Tibial artery (tissue), 4 donors: ENCODE measurements at regions of chr4 and their contacts with region 1.

Region 1: GRCh38 chr4:13484122-13484748 is at the start of gene RAB28:
- DNase-seq: peak; percentile 94 to 96
- H3K4me3 ChIP-seq: peak within 1 kb of the TSS; percentile 69 to 89
- H3K27ac ChIP-seq: peak within 1 kb of the TSS; percentile 83 to 97
- H3K4me1 ChIP-seq: peaks cover 0 to 29% (median 15%) of the 10 kb centered on the region in 4 donors
- H3K27me3 ChIP-seq: no peaks in the 10 kb centered on the region
- CTCF ChIP-seq: no peak

Region 2: DNA sequence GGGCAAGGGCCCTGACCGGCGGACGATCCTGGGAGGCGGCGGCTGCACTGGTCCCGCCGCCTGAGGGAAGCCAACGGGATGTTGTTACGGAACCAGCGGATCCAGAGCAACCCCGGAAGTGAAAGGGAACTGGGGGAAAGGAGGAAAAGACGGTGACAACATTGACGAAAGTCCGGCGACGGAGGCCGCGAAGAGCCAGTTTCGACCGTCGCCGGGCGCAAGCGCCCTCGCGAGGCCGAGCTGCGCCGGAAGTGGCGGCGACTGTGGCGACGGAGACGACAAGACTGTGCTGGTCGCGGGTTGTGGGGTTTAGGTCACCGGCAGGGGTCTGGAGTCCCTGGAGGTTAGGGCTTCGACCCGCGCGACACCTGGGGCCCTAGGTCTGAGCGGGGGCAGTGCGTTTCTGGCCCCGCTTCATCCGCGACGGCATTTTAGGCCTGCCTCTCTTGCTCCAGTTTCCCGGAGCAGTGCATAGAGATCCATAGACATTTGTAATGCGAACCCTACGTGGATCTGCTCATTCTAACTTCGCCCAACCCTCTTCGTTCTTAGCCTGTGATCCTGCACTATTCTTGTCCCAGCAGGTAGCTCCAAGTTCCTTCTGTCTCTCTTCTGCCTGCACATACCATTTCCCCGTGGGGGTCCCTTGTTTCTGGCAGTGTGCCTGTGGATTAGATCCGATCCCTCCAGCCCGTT is 143.5 kb after region 1 on chr4 and contains the start of gene BOD1L1:
- intact Hi-C with region 1: loop called (anchors 10 kb)
- DNase-seq: peak; percentile 85 to 93
- H3K4me3 ChIP-seq: peak within 1 kb of the TSS; percentile 80 to 93
- H3K27ac ChIP-seq: peak within 1 kb of the TSS; percentile 91 to 95
- H3K4me1 ChIP-seq: peaks cover 0 to 33% (median 17%) of the 10 kb centered on the region in 4 donors
- H3K27me3 ChIP-seq: no peaks in the 10 kb centered on the region
- CTCF ChIP-seq: peak; percentile 35 to 40